CD8-positive, alpha-beta T cell (primary cell): ENCODE measurements at regions of chr1 and their contacts with region 1.

Region 1: GRCh38 chr1:66446261-66447001 is 87.5 kb upstream of the SGIP1 start:
- DNase-seq: peak in 6 of 9 experiments; percentile 14 to 86 (median 31)
- ATAC-seq: peak; percentile 74
- H3K4me3 ChIP-seq: peak overlapping the region in 1 of 2 experiments; percentile 12
- H3K4me3 Mint-ChIP-seq: peak overlapping the region; percentile 66
- H3K27ac ChIP-seq: peak overlapping the region; percentile 47 to 73
- H3K27ac Mint-ChIP-seq: peak overlapping the region; percentile 95
- H3K4me1 ChIP-seq: peaks cover 20% of the 10 kb centered on the region
- H3K4me1 Mint-ChIP-seq: peaks cover 23% of the 10 kb centered on the region
- H3K27me3 ChIP-seq: no peaks in the 10 kb centered on the region
- H3K27me3 Mint-ChIP-seq: no peaks in the 10 kb centered on the region
- CTCF ChIP-seq: peak; percentile 90

Region 2: GRCh38 chr1:65958561-65959350 is 487.7 kb before region 1 on chr1:
- CTCF ChIA-PET with region 1: interaction called, 123 read pairs
- POLR2A ChIA-PET with region 1: interaction called, 9 read pairs
- intact Hi-C with region 1: loop called (anchors 1 kb)
- DNase-seq: peak in 4 of 9 experiments; percentile 15 to 70 (median 42)
- ATAC-seq: peak; percentile 57
- H3K4me3 ChIP-seq: no peak overlapping the region
- H3K4me3 Mint-ChIP-seq: no peak overlapping the region
- H3K27ac ChIP-seq: no peak overlapping the region
- H3K27ac Mint-ChIP-seq: no peak overlapping the region
- H3K4me1 ChIP-seq: no peaks in the 10 kb centered on the region
- H3K4me1 Mint-ChIP-seq: no peaks in the 10 kb centered on the region
- H3K27me3 ChIP-seq: no peaks in the 10 kb centered on the region
- H3K27me3 Mint-ChIP-seq: peaks cover 3% of the 10 kb centered on the region
- CTCF ChIP-seq: peak; percentile 91

Region 3: DNA sequence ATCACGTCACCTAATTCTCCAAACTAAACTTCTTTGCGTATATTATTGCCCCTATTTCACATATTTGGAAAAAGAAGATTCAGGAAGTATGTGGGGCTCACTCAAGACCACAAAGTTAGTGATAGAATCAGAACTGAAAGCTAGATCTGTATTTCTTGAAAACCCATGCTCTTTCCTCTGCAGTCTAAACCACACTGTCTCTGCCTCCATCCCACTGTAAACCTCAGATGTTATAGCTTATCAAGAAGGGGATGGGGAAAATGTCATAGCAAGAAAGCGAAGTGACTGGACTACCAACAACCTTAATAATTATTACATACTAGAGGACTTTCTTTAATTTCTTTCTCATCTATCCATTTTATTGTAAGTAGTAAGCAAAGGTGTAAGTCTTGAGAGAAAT is 170.2 kb before region 1 on chr1:
- CTCF ChIA-PET with region 1: interaction called, 32 read pairs
- POLR2A ChIA-PET with region 1: interaction called, 15 read pairs
- intact Hi-C with region 1: no loop called
- DNase-seq: peak in 3 of 9 experiments; percentile 22 to 73 (median 55)
- ATAC-seq: peak; percentile 51
- H3K4me3 ChIP-seq: peak overlapping the region; percentile 4 to 10
- H3K4me3 Mint-ChIP-seq: peak overlapping the region; percentile 71
- H3K27ac ChIP-seq: peak overlapping the region; percentile 6 to 51
- H3K27ac Mint-ChIP-seq: peak overlapping the region; percentile 87
- H3K4me1 ChIP-seq: peaks cover 56% of the 10 kb centered on the region
- H3K4me1 Mint-ChIP-seq: peaks cover 91% of the 10 kb centered on the region
- H3K27me3 ChIP-seq: no peaks in the 10 kb centered on the region
- H3K27me3 Mint-ChIP-seq: no peaks in the 10 kb centered on the region
- CTCF ChIP-seq: no peak

Region 4: DNA sequence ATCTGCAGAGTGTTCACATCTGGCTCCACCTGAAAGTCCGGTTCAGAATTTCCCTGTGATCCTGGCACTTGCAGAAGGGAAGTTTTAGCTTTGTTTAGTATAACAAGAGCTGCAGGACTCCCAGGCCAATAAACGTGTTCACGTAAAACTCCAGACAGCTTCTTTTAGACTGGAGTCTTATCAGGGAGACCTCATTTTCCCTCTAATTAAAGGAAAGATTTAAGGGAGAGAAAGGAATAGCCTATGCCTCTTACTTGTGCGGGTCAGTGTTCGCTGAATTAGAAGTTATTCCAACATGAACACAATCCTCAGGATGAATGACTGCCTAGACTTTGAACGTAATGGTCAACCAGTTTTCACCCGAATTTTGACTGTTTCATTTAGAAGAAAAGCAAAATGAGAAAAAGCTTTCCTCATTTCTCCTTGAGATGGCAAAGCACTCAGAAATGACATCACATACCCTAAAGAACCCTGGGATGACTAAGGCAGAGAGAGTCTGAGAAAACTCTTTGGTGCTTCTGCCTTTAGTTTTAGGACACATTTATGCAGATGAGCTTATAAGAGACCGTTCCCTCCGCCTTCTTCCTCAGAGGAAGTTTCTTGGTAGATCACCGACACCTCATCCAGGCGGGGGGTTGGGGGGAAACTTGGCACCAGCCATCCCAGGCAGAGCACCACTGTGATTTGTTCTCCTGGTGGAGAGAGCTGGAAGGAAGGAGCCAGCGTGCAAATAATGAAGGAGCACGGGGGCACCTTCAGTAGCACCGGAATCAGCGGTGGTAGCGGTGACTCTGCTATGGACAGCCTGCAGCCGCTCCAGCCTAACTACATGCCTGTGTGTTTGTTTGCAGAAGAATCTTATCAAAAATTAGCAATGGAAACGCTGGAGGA is 114.5 kb before region 1 on chr1:
- CTCF ChIA-PET with region 1: interaction called, 48 read pairs
- POLR2A ChIA-PET with region 1: interaction called, 11 read pairs
- intact Hi-C with region 1: loop called in 1 of 2 experiments (anchors 1 kb)
- DNase-seq: peak in 8 of 9 experiments; percentile 18 to 74 (median 54)
- ATAC-seq: peak; percentile 12
- H3K4me3 ChIP-seq: peak overlapping the region; percentile 73 to 79
- H3K4me3 Mint-ChIP-seq: peak overlapping the region; percentile 99
- H3K27ac ChIP-seq: peak overlapping the region; percentile 86
- H3K27ac Mint-ChIP-seq: peak overlapping the region; percentile 98
- H3K4me1 ChIP-seq: peaks cover 42% of the 10 kb centered on the region
- H3K4me1 Mint-ChIP-seq: peaks cover 70% of the 10 kb centered on the region
- H3K27me3 ChIP-seq: no peaks in the 10 kb centered on the region
- H3K27me3 Mint-ChIP-seq: no peaks in the 10 kb centered on the region
- CTCF ChIP-seq: no peak

Region 5: DNA sequence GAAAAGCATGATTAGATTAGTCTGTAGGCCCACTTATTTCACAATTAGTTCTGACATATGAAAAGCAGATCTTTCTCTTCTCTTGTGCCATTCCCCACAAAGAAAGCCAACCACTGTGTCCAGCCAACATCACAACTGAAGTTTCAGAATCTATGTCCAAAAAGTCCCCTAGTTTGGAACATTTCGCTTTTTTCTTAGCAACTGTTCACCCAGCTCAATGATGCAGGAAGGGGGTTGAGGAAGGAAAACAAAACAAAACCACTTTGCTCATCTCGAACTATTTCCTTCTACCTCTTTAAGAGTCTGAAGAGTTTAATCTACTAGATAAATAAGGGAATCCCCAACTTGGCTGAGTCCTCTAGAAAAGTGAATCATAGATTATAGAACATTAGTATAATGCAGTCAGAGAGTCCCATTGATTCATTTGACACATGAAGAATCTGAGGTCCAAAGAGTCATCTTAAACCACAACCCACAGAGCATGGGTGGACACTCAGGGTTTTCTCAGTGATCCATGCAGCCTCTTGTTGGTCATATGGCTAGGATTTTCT is 71.8 kb before region 1 on chr1:
- CTCF ChIA-PET with region 1: interaction called, 23 read pairs
- POLR2A ChIA-PET with region 1: interaction called, 4 read pairs
- intact Hi-C with region 1: loop called in 1 of 2 experiments (anchors 2 kb)
- DNase-seq: peak in 3 of 9 experiments; percentile 22 to 77 (median 61)
- ATAC-seq: peak; percentile 69
- H3K4me3 ChIP-seq: no peak overlapping the region
- H3K4me3 Mint-ChIP-seq: peak overlapping the region; percentile 63
- H3K27ac ChIP-seq: peak overlapping the region; percentile 19 to 75
- H3K27ac Mint-ChIP-seq: peak overlapping the region; percentile 94
- H3K4me1 ChIP-seq: peaks cover 48% of the 10 kb centered on the region
- H3K4me1 Mint-ChIP-seq: peaks cover 64% of the 10 kb centered on the region
- H3K27me3 ChIP-seq: peaks cover 0 to under 1% of the 10 kb centered on the region in 2 experiments
- H3K27me3 Mint-ChIP-seq: no peaks in the 10 kb centered on the region
- CTCF ChIP-seq: no peak